ENCODE measurements at regions of chr10 and their contacts with region 1.

Region 1: GRCh38 chr10:101889256-101890210 is 45.9 kb upstream of the KCNIP2 start:
- DNase-seq: peak; percentile 65
- CTCF ChIP-seq: peak; percentile 83

Region 2: GRCh38 chr10:101214446-101215396 is 674.8 kb before region 1 on chr10:
- in situ Hi-C with region 1: no loop called
- DNase-seq: peak; percentile 79
- CTCF ChIP-seq: peak; percentile 93

Region 3: DNA sequence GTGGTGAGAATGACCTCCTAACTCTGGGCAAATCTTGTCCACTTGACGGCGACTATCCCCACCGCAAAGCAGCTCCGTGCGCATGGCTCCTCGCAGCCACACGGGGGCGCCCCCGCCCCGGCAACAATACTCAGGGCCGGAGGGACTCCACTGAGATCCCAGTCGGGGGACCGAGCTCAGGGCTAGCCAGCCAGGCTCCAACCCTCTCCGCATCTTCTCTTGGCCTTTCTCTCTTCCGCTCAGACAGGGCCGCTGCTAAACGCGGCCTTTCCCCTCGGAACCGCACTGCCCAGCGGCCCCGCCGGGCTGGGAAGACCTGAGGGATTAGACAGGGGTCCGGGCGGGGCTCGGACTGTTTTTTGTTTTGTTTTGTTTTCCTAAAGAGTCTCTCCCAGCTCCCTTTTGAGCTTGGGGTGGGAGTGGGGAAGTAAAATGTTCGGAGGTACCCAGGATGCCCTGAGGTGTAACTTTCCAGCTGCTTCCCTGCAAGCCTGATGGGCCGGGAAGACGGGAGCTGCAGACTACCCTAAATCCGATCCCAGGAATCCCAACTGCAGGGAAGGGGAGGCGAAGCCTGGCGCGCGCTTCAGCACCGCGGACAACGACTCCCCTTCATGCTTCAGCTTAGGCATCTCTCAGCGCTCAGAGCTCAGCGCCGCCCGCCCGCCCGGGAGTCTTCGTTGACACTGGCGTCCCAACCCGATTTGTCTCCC is 48.6 kb before region 1 on chr10:
- in situ Hi-C with region 1: loop called (anchors 10 kb)
- DNase-seq: peak; percentile 92
- CTCF ChIP-seq: peak; percentile 99

Measured in GM13977 (cell line).